ENCODE measurements at regions of chr6 and their contacts with region 1.

Region 1: GRCh38 chr6:15287670-15288375 is 42.0 kb downstream of the JARID2 start:
- DNase-seq: no peak
- H3K4me3 ChIP-seq: no peak overlapping the region
- H3K27ac ChIP-seq: no peak overlapping the region
- H3K4me1 ChIP-seq: peaks cover 43% of the 10 kb centered on the region
- H3K27me3 ChIP-seq: no peaks in the 10 kb centered on the region
- CTCF ChIP-seq: no peak

Region 2: GRCh38 chr6:14711056-14711703 is 576.6 kb before region 1 on chr6:
- CTCF ChIA-PET with region 1: interaction called, 16 read pairs
- POLR2A ChIA-PET with region 1: no interaction called
- intact Hi-C with region 1: no loop called
- DNase-seq: peak; percentile 72 to 82
- H3K4me3 ChIP-seq: no peak overlapping the region
- H3K27ac ChIP-seq: peak overlapping the region; percentile 91
- H3K4me1 ChIP-seq: peaks cover 50% of the 10 kb centered on the region
- H3K27me3 ChIP-seq: no peaks in the 10 kb centered on the region
- CTCF ChIP-seq: peak; percentile 66

Region 3: GRCh38 chr6:14841901-14842421 is 445.9 kb before region 1 on chr6:
- CTCF ChIA-PET with region 1: no interaction called
- POLR2A ChIA-PET with region 1: interaction called, 16 read pairs
- intact Hi-C with region 1: no loop called
- DNase-seq: no peak
- H3K4me3 ChIP-seq: no peak overlapping the region
- H3K27ac ChIP-seq: 0 out of 2 replicates have a peak overlapping the region, but pooled peaks have one; percentile 17
- H3K4me1 ChIP-seq: peaks cover 8% of the 10 kb centered on the region; the same call in 1 of the 2 replicates
- H3K27me3 ChIP-seq: no peaks in the 10 kb centered on the region
- CTCF ChIP-seq: no peak

Region 4: GRCh38 chr6:15008269-15008668 is 279.6 kb before region 1 on chr6:
- CTCF ChIA-PET with region 1: no interaction called
- POLR2A ChIA-PET with region 1: no interaction called
- intact Hi-C with region 1: no loop called
- DNase-seq: no peak
- H3K4me3 ChIP-seq: no peak overlapping the region
- H3K27ac ChIP-seq: no peak overlapping the region
- H3K4me1 ChIP-seq: no peaks in the 10 kb centered on the region
- H3K27me3 ChIP-seq: no peaks in the 10 kb centered on the region
- CTCF ChIP-seq: no peak

Region 5: GRCh38 chr6:15200087-15200486 is 87.7 kb before region 1 on chr6:
- CTCF ChIA-PET with region 1: no interaction called
- POLR2A ChIA-PET with region 1: no interaction called
- intact Hi-C with region 1: no loop called
- DNase-seq: no peak
- H3K4me3 ChIP-seq: no peak overlapping the region
- H3K27ac ChIP-seq: no peak overlapping the region
- H3K4me1 ChIP-seq: no peaks in the 10 kb centered on the region
- H3K27me3 ChIP-seq: no peaks in the 10 kb centered on the region
- CTCF ChIP-seq: no peak

Region 6: GRCh38 chr6:15297895-15298590 is 10.2 kb after region 1 on chr6:
- CTCF ChIA-PET with region 1: interaction called, 15 read pairs
- POLR2A ChIA-PET with region 1: no interaction called
- intact Hi-C with region 1: no loop called
- DNase-seq: no peak
- H3K4me3 ChIP-seq: no peak overlapping the region
- H3K27ac ChIP-seq: no peak overlapping the region
- H3K4me1 ChIP-seq: peaks cover 15% of the 10 kb centered on the region
- H3K27me3 ChIP-seq: no peaks in the 10 kb centered on the region
- CTCF ChIP-seq: no peak

Region 7: GRCh38 chr6:15327271-15327670 is 39.4 kb after region 1 on chr6:
- CTCF ChIA-PET with region 1: no interaction called
- POLR2A ChIA-PET with region 1: interaction called, 4 read pairs
- intact Hi-C with region 1: loop called (anchors 1 kb)
- DNase-seq: no peak
- H3K4me3 ChIP-seq: no peak overlapping the region
- H3K27ac ChIP-seq: no peak overlapping the region
- H3K4me1 ChIP-seq: peaks cover 51% of the 10 kb centered on the region
- H3K27me3 ChIP-seq: no peaks in the 10 kb centered on the region
- CTCF ChIP-seq: no peak

Measured in PC-9 (cell line).